Activated T-helper 1 cell treated with anti-CD3 and anti-CD28 coated beads, Interleukin-12 subunit alpha, Interleukin-12 subunit beta, Interleukin-2, Interleukin-4 antibody, amounts not matched to agents 30 ng/mL and 10 ng/mL and 1 ng/mL, durations not matched to agents 14 hours and 24 hours and 36 hours (primary cell): ENCODE measurements at regions of chr12 and their contacts with region 1.

Region 1: DNA sequence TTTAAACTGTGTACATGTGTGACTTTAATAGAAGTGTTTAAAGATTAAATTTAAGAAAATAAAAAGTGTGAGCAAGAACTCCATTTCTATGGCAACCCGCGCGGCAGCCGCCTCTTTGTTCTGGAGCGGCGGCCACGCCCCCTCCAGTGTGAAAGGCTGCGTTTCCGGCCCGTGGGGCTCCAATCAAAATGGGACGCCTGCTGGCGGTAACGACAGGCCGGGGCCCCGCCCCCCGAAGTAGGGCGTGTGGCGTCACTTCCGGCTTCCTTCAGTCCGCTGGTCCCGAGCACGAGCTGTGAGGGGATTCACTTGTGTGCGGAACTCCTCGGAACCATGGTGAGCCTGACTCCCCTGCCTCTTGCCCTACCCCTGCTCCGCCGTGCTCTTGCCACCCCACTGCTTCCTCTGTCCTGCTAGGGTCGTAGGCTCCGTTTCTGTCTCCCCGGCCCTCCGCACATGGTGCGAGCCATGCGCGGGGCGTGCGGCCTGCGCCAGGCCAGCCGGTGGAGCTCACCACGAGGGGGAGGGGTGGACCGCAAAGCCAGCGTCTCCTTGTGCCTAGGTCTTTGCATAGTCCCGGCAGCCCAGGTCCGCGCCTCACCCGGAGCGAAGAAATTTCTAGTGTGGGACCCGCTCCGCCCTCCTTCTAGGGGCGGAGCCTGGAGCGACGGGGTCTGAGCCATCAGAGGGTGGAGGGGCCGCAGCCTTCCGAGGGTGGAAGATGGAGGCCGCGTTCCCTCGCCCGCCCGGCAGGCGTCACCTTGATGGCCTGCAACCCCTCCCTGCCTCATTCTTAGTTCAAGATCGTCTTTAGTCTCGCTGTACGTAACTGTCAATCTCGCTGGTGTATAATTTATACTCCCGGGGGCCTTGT is at the start of gene CCT2:
- DNase-seq: peak; percentile 94
- H3K4me3 Mint-ChIP-seq: peak within 1 kb of the TSS; percentile 98
- H3K27ac Mint-ChIP-seq: peak within 1 kb of the TSS; percentile 97
- H3K4me1 Mint-ChIP-seq: peaks cover 11% of the 10 kb centered on the region
- H3K27me3 Mint-ChIP-seq: no peaks in the 10 kb centered on the region
- total RNA-seq, gene CCT2: 442 and 447 TPM in 2 replicates

Region 2: DNA sequence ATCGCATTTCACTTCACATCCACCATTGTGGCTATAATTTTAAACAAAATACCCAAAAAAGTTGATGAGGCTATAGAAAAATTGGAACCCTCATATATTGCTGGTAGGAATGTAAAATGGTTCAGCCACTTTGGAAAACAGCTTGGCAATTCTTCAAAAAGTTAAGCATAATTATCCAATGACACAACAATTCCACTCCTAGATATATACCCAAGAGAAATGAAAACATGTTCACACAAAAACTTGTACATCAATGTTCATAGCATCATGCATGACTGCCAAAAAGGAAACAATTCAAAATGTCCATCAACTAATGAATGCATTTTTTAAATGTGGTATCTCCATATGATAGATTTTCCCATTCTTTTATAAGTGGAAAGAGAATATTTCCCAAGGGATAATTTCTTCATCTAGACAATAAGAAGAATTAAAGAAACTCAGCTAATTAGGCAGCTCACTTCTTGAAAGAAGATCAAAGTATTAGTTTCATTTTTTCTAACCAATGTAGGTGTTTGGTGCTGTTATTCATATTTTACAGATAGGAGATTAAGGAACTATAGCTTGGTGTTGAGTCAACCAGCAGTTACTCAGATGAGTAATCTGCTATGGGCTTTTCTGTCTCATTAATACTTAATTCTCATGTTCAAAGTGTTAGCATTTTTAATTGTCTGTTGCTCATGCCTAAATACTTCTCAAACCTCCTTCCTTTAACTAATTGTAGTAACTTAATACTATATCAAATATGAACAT is 193.1 kb before region 1 on chr12:
- intact Hi-C with region 1: no loop called
- DNase-seq: no peak
- H3K4me3 Mint-ChIP-seq: no peak overlapping the region
- H3K27ac Mint-ChIP-seq: no peak overlapping the region
- H3K4me1 Mint-ChIP-seq: no peaks in the 10 kb centered on the region
- H3K27me3 Mint-ChIP-seq: no peaks in the 10 kb centered on the region

Region 3: GRCh38 chr12:69534389-69534822 is 51.0 kb before region 1 on chr12:
- intact Hi-C with region 1: loop called (anchors 1 kb)
- DNase-seq: peak; percentile 20
- H3K4me3 Mint-ChIP-seq: no peak overlapping the region
- H3K27ac Mint-ChIP-seq: peak overlapping the region; percentile 79
- H3K4me1 Mint-ChIP-seq: peaks cover 24% of the 10 kb centered on the region
- H3K27me3 Mint-ChIP-seq: no peaks in the 10 kb centered on the region

Region 4: GRCh38 chr12:69595689-69596088 is 10.3 kb after region 1 on chr12:
- intact Hi-C with region 1: loop called (anchors 1 kb)
- DNase-seq: no peak
- H3K4me3 Mint-ChIP-seq: no peak overlapping the region
- H3K27ac Mint-ChIP-seq: no peak overlapping the region
- H3K4me1 Mint-ChIP-seq: peaks cover 9% of the 10 kb centered on the region
- H3K27me3 Mint-ChIP-seq: no peaks in the 10 kb centered on the region

Region 5: DNA sequence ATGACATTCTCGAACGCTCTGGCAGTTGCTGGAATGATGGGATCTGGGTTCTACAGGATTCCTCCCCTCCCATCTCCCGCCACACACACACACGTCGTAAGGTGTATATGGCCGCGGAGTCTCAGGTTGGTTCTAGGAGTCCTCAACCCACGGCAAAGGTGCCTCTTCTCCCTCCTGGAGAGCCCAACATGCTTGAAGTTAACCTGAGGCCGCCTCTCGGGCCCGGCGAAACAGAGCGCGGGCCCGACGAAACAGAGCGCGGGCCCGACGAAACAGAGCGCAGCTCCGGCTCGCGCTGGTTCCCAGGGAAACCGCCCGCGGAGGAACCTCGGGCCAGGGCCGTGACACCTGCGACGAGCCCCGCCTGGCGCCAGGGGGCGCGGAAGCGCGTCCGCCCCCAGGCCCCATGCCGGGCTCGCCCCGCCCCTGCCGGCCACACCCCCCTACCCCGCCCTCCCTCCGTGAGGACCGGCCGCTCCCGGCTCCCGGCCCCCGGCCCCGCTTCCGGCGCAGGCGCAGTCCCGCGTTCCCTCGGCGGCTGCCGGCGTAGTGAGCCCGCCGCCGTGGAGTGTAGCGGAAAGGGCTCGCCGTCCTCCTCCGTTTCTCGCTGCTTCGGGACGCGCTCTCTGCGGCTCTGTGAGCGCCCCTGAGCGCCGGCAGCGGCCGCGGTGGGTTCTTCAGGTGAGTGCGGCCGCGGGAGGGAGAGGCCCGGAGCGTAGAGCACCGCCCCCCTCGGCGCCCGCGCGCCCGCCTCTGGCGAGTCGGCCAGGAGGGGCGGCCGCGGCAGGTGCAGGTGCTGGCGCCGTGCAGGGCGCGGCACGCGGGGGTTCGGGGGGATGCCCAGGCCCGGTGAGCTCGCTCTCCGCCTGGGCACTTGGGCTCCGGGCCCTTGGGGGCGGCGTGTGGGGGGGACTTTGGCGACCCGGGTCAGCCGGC is 153.2 kb after region 1 on chr12 and contains the start of gene RAB3IP:
- intact Hi-C with region 1: loop called (anchors 1 kb)
- DNase-seq: peak; percentile 88
- H3K4me3 Mint-ChIP-seq: peak within 1 kb of the TSS; percentile 95
- H3K27ac Mint-ChIP-seq: peak within 1 kb of the TSS; percentile 92
- H3K4me1 Mint-ChIP-seq: peaks cover 31% of the 10 kb centered on the region
- H3K27me3 Mint-ChIP-seq: peaks cover 36% of the 10 kb centered on the region
- total RNA-seq, gene RAB3IP: 29.8 and 36.1 TPM in 2 replicates

Region 6: GRCh38 chr12:70110085-70110484 is 524.7 kb after region 1 on chr12:
- intact Hi-C with region 1: no loop called
- DNase-seq: no peak
- H3K4me3 Mint-ChIP-seq: no peak overlapping the region
- H3K27ac Mint-ChIP-seq: no peak overlapping the region
- H3K4me1 Mint-ChIP-seq: no peaks in the 10 kb centered on the region
- H3K27me3 Mint-ChIP-seq: no peaks in the 10 kb centered on the region